ENCODE measurements at regions of chr5 and their contacts with region 1.

Region 1: GRCh38 chr5:137735555-137736284 is at the start of gene KLHL3:
- DNase-seq: peak; percentile 34 to 39
- ATAC-seq: peak; percentile 37 to 85 (median 74)
- H3K4me3 ChIP-seq: peak within 1 kb of the TSS; percentile 14 to 62 (median 52)
- H3K27ac ChIP-seq: peak within 1 kb of the TSS; percentile 1 to 89 (median 78)
- H3K4me1 ChIP-seq: peaks cover 15 to 64% (median 57%) of the 10 kb centered on the region in 9 donors
- H3K27me3 ChIP-seq: no peaks in the 10 kb centered on the region
- CTCF ChIP-seq: peak in 3 of 9 donors; percentile 49 to 52 (median 49)
- total RNA-seq, gene KLHL3: 20.4 to 37.4 (median 28.2) TPM

Region 2: GRCh38 chr5:137629646-137630045 is 106.1 kb before region 1 on chr5:
- intact Hi-C with region 1: loop called in 7 of 10 experiments (anchors 2 to 10 kb)
- DNase-seq: peak in 1 of 2 donors; percentile 40
- ATAC-seq: peak; percentile 30 to 89 (median 73)
- H3K4me3 ChIP-seq: no peak overlapping the region
- H3K27ac ChIP-seq: peak overlapping the region in 9 of 10 donors; percentile 45 to 73 (median 60)
- H3K4me1 ChIP-seq: peaks cover 4 to 35% (median 28%) of the 10 kb centered on the region in 9 donors
- H3K27me3 ChIP-seq: no peaks in the 10 kb centered on the region
- CTCF ChIP-seq: peak; percentile 76 to 95 (median 92)

Region 3: DNA sequence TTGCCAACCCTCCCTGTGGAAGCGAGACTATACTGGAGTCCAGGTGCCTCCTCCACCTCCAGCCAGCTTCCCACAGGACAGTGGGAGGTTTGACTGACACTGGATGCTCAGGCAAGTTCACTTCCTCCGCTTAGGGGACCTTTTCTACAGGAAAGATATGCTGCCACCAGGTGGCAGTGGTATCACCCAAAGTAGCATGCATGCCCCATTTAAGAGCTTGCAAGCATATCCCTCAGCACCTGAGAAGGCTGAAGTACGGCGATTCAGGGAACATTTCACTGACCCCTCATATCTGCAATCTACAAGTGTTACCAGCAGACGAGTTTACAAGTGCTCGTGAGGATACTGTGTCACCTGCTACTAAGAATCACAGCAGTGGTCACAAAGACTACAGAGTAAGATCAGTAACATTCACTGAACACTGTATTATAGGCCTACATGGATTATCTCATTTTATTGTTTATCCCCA is 75.3 kb before region 1 on chr5:
- intact Hi-C with region 1: loop called in 6 of 10 experiments (anchors 2 to 5 kb)
- DNase-seq: peak; percentile 26 to 70
- ATAC-seq: peak; percentile 78 to 94 (median 88)
- H3K4me3 ChIP-seq: no peak overlapping the region
- H3K27ac ChIP-seq: no peak overlapping the region
- H3K4me1 ChIP-seq: peaks cover 0 to 15% (median 10%) of the 10 kb centered on the region in 9 donors
- H3K27me3 ChIP-seq: no peaks in the 10 kb centered on the region
- CTCF ChIP-seq: peak; percentile 49 to 88 (median 83)

Region 4: GRCh38 chr5:137695651-137696428 is 39.9 kb before region 1 on chr5:
- intact Hi-C with region 1: loop called in 3 of 10 experiments (anchors 2 to 5 kb)
- DNase-seq: peak; percentile 22 to 27
- ATAC-seq: peak in 7 of 8 donors; percentile 31 to 82 (median 61)
- H3K4me3 ChIP-seq: no peak overlapping the region
- H3K27ac ChIP-seq: peak overlapping the region; percentile 33 to 87 (median 64)
- H3K4me1 ChIP-seq: peaks cover 21 to 64% (median 49%) of the 10 kb centered on the region in 9 donors
- H3K27me3 ChIP-seq: no peaks in the 10 kb centered on the region
- CTCF ChIP-seq: peak in 7 of 9 donors; percentile 23 to 63 (median 46)